ENCODE measurements at regions of chr9 and their contacts with region 1.

Region 1: GRCh38 chr9:89730715-89731114 is 125.9 kb downstream of the GADD45G start:
- H3K4me3 Mint-ChIP-seq: no peak overlapping the region
- H3K27ac Mint-ChIP-seq: no peak overlapping the region
- H3K4me1 Mint-ChIP-seq: peaks cover 30% of the 10 kb centered on the region
- H3K27me3 Mint-ChIP-seq: peaks cover 11% of the 10 kb centered on the region

Region 2: GRCh38 chr9:89536145-89536574 is 194.6 kb before region 1 on chr9:
- intact Hi-C with region 1: no loop called
- H3K4me3 Mint-ChIP-seq: no peak overlapping the region
- H3K27ac Mint-ChIP-seq: peak overlapping the region; percentile 24
- H3K4me1 Mint-ChIP-seq: peaks cover 51% of the 10 kb centered on the region
- H3K27me3 Mint-ChIP-seq: peaks cover 8% of the 10 kb centered on the region

Region 3: DNA sequence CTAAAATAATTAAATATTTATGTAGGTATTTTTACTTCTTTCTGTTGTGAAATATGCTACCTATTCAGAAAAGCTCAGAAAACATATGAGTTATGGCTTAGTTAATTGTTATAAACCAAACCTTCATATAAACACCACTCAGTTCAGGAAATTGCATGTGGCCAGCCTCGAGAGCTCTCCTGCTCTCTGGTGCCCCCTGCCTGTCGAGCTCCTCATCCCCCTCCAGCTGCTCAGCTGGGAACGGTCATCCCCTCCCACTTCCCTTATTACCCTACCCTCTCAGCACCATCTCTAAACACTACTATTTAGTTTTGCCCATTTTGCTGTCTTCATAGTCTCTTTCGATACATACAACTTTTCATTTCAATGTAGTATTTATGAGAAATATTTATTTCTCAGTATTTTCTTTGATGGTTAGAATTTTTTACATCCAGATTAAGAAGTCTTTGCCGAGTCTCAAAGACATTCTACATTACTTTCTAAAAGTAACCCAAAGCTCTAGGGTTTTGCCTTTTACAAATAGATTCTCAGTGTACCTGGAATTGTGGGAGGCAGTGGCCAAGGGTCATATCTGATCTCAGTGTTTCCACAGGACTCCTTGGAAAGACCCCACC is 181.6 kb before region 1 on chr9:
- intact Hi-C with region 1: no loop called
- H3K4me3 Mint-ChIP-seq: no peak overlapping the region
- H3K27ac Mint-ChIP-seq: no peak overlapping the region
- H3K4me1 Mint-ChIP-seq: peaks cover 28% of the 10 kb centered on the region
- H3K27me3 Mint-ChIP-seq: no peaks in the 10 kb centered on the region

Region 4: DNA sequence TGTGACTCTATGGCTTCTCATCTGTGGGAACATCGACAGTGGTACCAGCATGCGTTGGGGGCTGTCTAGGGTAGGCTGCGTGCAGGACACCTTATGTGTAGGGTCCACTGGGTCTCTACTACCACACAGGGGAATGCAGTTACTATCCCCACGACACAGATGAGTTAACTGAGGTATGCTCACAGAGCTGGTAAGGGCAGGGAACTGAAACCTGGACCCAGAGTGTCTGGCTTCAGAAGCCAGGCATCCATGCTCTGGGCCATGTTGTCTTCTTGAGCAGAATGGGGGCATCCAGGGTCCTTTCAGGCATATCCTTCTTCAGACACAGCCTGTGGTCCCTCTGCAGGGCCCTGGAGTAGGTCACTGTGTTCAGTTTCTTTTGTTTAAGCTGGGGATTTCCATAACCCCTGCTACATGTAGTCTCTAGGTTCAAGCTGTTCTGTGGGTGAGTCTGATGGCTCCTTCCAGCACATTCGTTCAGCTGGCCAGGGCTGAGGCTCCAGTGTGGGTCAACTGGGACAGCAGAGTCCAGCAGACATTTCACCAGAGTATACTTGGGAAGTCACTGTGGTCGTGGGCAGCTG is 22.8 kb after region 1 on chr9:
- intact Hi-C with region 1: loop called (anchors 1 kb)
- H3K4me3 Mint-ChIP-seq: no peak overlapping the region
- H3K27ac Mint-ChIP-seq: no peak overlapping the region
- H3K4me1 Mint-ChIP-seq: peaks cover 7% of the 10 kb centered on the region
- H3K27me3 Mint-ChIP-seq: peaks cover 14% of the 10 kb centered on the region

Region 5: DNA sequence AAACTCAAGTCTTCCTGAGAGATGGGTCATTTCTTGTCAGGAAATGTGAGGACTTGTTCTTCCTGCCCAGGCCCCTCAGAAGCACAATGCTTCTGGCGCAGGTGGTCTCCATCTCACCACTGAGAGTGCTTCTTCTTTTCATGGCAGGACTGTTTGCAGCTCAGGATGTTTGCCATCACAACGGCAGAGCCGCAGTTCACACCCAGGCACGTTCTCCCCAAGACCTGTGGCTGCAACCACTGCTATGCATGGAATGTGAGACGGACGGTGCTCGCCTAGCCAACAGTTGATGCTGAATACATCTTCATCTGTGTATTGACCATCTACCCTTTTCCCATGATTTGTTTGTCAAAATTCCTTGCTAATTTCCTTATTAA is 90.4 kb after region 1 on chr9:
- intact Hi-C with region 1: no loop called
- H3K4me3 Mint-ChIP-seq: no peak overlapping the region
- H3K27ac Mint-ChIP-seq: no peak overlapping the region
- H3K4me1 Mint-ChIP-seq: peaks cover 26% of the 10 kb centered on the region
- H3K27me3 Mint-ChIP-seq: peaks cover 34% of the 10 kb centered on the region

Measured in dendritic cell treated with granulocyte-macrophage colony-stimulating factor and Interleukin-4, amounts not matched to agents 40 ng/mL and 50 ng/mL, for 4 days (primary cell).